AG04449 (cell line): ENCODE measurements at regions of chr2 and their contacts with region 1.

Region 1: DNA sequence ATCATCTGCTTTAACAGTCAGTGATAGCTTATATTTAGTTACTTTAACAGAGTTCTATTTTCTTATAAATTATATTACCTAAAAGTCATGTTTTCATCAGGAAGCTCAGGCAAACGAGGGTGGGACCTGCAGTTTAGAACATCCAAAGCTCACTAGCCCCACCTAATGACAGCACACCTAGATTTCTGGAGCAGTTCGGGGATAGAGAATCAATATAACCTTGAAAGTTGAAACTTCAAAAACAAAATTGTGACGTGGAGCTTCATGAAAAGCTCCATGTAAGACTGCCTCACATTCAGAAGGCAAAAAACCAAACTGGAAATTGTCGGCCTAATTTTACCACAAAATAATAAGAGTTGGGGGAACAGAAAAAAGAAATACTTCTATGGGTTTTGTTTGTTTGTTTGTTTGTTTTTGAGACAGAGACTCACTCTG is 185.9 kb upstream of the CCDC150 start:
- DNase-seq: peak; percentile 14
- H3K4me3 ChIP-seq: no peak overlapping the region
- CTCF ChIP-seq: peak; percentile 52

Region 2: GRCh38 chr2:196068271-196069209 is 385.1 kb before region 1 on chr2 and contains the start of gene DNAH7:
- CTCF ChIA-PET with region 1: interaction called, 21 read pairs
- POLR2A ChIA-PET with region 1: no interaction called
- DNase-seq: no peak
- H3K4me3 ChIP-seq: peak within 1 kb of the TSS; percentile 99
- CTCF ChIP-seq: peak; percentile 98

Region 3: GRCh38 chr2:196277002-196277401 is 176.6 kb before region 1 on chr2:
- CTCF ChIA-PET with region 1: interaction called, 13 read pairs
- POLR2A ChIA-PET with region 1: no interaction called
- DNase-seq: no peak
- H3K4me3 ChIP-seq: no peak overlapping the region
- CTCF ChIP-seq: peak; percentile 42

Region 4: DNA sequence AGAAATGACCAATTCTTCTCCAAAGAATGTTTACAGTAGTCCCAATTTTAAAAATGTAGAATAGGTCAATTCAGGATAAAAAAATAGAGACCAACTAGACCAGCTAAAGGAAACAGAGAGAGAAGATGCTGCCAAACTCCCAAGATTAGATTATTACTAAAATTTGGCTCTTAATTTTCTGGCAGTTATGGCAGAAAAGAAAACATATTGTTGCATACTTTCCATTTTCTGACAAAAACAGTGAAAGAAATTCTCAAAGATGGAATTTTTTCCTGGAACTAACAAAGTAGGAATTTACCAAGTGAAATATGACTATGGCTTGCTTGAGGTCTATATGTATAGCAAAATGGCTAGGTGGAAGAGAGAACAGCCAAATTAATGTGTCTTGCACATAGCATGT is 143.9 kb before region 1 on chr2:
- CTCF ChIA-PET with region 1: interaction called, 26 read pairs
- POLR2A ChIA-PET with region 1: no interaction called
- DNase-seq: no peak
- H3K4me3 ChIP-seq: no peak overlapping the region
- CTCF ChIP-seq: no peak

Region 5: DNA sequence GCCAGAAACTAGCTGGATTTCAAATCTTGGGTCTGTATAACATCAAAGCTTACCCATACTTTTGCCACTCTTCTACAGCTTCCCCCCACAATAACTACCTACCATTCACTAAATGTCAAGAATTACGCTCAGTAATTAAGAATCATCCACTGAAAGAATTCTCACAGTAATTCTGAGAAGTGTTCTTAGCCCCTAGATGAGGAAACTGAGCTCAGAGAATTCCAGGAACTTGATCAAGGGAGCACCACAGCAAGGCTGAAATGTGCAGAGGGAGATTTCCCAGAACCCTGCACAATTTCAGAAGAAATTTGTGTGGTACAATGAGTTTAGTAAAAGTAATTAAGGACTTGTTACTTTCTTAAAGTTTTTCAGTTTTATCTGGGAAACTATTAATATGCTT is 87.7 kb before region 1 on chr2:
- CTCF ChIA-PET with region 1: interaction called, 15 read pairs
- POLR2A ChIA-PET with region 1: no interaction called
- DNase-seq: no peak
- H3K4me3 ChIP-seq: no peak overlapping the region
- CTCF ChIP-seq: no peak

Region 6: DNA sequence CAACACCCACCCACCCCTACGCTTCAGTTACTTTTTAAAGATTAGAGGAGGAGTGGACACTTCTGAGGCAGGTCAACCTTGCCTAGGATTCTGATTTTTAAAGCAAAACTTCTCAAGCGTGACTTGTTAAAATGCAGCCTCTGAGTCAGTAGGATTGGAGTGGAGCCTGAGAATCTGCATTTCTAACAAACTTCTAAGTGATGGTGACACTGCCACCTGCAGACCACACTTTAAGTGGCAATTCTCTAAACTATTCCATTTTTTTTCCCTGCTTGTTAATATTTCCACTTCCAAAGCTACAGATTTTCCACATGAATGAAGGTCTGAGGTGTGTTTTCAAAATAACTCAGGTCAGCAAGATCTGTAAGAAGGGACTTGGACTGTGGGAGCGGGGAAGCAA is 14.8 kb after region 1 on chr2:
- CTCF ChIA-PET with region 1: interaction called, 41 read pairs
- POLR2A ChIA-PET with region 1: no interaction called
- DNase-seq: no peak
- H3K4me3 ChIP-seq: no peak overlapping the region
- CTCF ChIP-seq: no peak

Region 7: DNA sequence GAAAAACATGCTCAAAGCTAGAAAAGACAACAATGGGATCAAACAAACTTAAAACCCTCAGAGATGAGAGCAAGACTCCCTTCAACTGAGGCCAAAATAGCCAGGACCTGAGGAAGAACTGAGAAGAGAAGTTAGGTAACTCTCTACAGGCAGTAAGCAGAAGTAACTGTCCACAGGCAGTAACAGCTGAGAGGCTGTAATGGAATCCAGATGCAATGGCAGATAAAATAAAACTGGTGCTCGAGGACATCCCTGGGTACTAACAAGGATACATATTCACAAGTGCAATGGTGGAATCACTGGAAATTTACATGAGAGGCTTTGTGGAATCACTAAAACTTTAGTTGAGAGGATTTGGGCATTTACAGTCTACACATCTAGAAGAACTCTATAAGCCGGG is 385.9 kb after region 1 on chr2:
- CTCF ChIA-PET with region 1: no interaction called
- POLR2A ChIA-PET with region 1: no interaction called
- DNase-seq: no peak
- H3K4me3 ChIP-seq: no peak overlapping the region
- CTCF ChIP-seq: no peak